Activated B cell treated with CpG ODN at 0.5 μM for 24 hours (primary cell): ENCODE measurements at regions of chr10 and their contacts with region 1.

Region 1: DNA sequence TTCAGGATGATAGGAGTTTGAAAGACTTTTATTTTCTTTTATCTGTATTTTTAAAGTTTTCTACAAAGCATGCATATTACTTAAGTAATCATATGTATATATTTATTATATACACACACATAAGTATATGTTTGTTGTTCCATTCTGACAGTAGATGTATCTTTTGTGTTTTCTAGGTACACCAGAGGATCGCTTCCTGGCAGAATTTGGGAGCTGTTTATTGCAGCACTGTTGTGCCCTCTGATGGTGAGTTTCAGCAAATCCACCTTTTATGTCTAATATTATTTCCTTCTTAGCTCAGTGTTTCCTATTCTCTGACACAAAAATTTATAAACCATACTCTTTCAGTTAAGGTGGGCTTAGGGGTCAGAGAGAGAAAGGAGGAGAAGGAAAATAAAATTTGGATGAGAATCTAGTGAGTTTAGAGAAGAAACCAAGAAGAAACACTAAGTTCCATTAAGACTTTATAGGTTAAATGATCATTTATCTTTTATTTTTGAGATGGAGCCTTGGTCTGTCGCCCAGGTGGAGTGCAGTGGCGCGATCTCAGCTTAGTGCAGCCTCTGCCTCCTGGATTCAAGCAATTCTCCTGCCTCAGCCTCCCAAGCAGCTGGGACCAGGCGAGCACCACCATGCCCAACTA is 59.2 kb upstream of the OIT3 start:
- DNase-seq: no peak
- ATAC-seq: peak; percentile 34
- H3K4me3 Mint-ChIP-seq: no peak overlapping the region
- H3K27ac Mint-ChIP-seq: no peak overlapping the region
- H3K4me1 Mint-ChIP-seq: no peaks in the 10 kb centered on the region
- H3K27me3 Mint-ChIP-seq: no peaks in the 10 kb centered on the region
- CTCF ChIP-seq: no peak

Region 2: GRCh38 chr10:72126184-72126871 is 708.0 kb before region 1 on chr10:
- CTCF ChIA-PET with region 1: no interaction called
- POLR2A ChIA-PET with region 1: no interaction called
- intact Hi-C with region 1: loop called (anchors 10 kb)
- DNase-seq: no peak
- ATAC-seq: no peak
- H3K4me3 Mint-ChIP-seq: no peak overlapping the region
- H3K27ac Mint-ChIP-seq: peak overlapping the region; percentile 42
- H3K4me1 Mint-ChIP-seq: peaks cover 2% of the 10 kb centered on the region
- H3K27me3 Mint-ChIP-seq: no peaks in the 10 kb centered on the region
- CTCF ChIP-seq: no peak

Region 3: GRCh38 chr10:72567884-72568640 is 266.2 kb before region 1 on chr10:
- CTCF ChIA-PET with region 1: no interaction called
- POLR2A ChIA-PET with region 1: no interaction called
- intact Hi-C with region 1: loop called (anchors 10 kb)
- DNase-seq: no peak
- ATAC-seq: no peak
- H3K4me3 Mint-ChIP-seq: no peak overlapping the region
- H3K27ac Mint-ChIP-seq: no peak overlapping the region
- H3K4me1 Mint-ChIP-seq: peaks cover 11% of the 10 kb centered on the region
- H3K27me3 Mint-ChIP-seq: no peaks in the 10 kb centered on the region
- CTCF ChIP-seq: no peak